OCI-LY7 (cell line): ENCODE measurements at regions of chr17 and their contacts with region 1.

Region 1: DNA sequence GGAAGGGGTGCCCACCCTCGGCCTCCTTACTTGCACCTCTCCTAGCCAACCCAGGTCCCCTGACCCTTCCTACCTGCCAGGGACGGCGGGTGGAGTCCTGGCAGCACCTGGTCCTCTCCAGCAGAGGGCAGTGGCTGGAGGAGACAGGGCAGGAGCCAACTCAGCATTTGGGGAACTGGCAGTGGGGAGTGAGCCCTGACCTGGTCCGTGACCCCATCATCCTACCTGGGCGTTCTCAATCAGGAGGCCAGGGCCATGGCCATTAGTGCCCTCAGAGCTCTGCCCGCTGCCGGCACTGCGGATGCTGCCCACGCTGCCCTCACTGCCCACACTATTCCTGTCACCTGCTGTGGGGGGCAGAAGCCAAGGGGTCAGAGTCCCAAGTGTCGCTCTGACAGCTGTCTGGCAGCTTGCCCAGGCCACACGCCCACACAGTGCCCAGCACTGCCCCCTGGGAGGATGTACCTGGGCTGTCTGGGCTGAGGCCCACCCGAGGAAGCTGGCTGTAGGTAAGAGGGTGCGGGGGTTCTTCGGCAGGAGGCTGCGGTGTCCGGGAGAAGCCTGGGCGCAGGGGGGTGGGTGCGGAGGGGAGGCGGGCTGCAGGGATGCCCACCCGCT is 10.9 kb downstream of the CASKIN2 start:
- DNase-seq: peak; percentile 70
- H3K4me3 ChIP-seq: no peak overlapping the region
- H3K27ac ChIP-seq: no peak overlapping the region
- H3K4me1 ChIP-seq: no peaks in the 10 kb centered on the region
- CTCF ChIP-seq: peak; percentile 84

Region 2: DNA sequence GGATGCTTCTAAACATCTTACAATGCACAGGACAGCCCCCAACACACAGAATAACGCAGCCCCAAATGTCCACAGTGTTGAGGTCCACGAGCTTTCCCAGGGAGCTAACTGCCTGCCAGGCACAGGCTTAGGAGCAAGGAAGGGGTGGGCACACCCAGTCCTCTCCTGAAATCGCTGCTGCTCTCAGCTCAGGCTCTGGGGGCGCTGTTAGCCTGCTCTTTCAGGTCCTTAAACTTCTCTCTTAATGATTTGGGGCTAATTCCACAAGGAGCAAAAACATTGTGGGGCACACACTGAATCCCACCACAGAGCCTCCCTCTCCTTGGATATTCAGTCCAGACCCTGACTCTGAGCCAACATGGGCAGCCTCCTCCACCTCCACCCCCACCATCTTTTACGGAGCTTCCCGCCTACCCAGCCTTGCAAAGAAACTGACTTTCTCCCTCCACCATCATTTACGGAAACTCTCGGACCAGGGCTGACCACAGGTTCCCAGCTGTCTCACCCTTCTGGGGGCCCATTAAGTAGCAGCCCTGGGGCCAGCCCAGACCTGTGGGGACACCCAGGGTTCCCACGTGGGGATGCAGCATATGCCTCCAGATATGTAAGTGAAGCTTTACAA is 938.2 kb before region 1 on chr17:
- CTCF ChIA-PET with region 1: no interaction called
- POLR2A ChIA-PET with region 1: no interaction called
- intact Hi-C with region 1: no loop called
- DNase-seq: peak; percentile 63
- H3K4me3 ChIP-seq: no peak overlapping the region
- H3K27ac ChIP-seq: no peak overlapping the region
- H3K4me1 ChIP-seq: no peaks in the 10 kb centered on the region
- CTCF ChIP-seq: peak; percentile 95

Region 3: GRCh38 chr17:75430159-75430974 is 74.1 kb before region 1 on chr17:
- CTCF ChIA-PET with region 1: no interaction called
- POLR2A ChIA-PET with region 1: interaction called, 3 read pairs
- intact Hi-C with region 1: loop called (anchors 1 kb)
- DNase-seq: no peak
- H3K4me3 ChIP-seq: no peak overlapping the region
- H3K27ac ChIP-seq: no peak overlapping the region
- H3K4me1 ChIP-seq: peaks cover 7% of the 10 kb centered on the region
- CTCF ChIP-seq: no peak